ENCODE measurements at regions of chr1 and their contacts with region 1.

Region 1: GRCh38 chr1:32240140-32240951 is 6.7 kb upstream of the FAM167B start:
- DNase-seq: peak; percentile 85 to 96
- H3K4me3 ChIP-seq: peak overlapping the region; percentile 65 to 91 (median 68)
- H3K27ac ChIP-seq: peak overlapping the region; percentile 55
- H3K4me1 ChIP-seq: peaks cover 0 to 7% (median 3%) of the 10 kb centered on the region in 4 experiments; a peak in 3 of 7 replicates
- H3K27me3 ChIP-seq: no peaks in the 10 kb centered on the region; a peak in 1 of 7 replicates
- CTCF ChIP-seq: peak in 2 of 3 experiments; percentile 16 to 27; a peak in 3 of 4 replicates
- EP300 ChIP-seq: no peak
- POLR2A ChIP-seq: peak in 1 of 2 experiments; percentile 73; a peak in 2 of 3 replicates
- RAD21 ChIP-seq: peak in 1 of 2 experiments; percentile 13; a peak in 1 of 4 replicates

Region 2: DNA sequence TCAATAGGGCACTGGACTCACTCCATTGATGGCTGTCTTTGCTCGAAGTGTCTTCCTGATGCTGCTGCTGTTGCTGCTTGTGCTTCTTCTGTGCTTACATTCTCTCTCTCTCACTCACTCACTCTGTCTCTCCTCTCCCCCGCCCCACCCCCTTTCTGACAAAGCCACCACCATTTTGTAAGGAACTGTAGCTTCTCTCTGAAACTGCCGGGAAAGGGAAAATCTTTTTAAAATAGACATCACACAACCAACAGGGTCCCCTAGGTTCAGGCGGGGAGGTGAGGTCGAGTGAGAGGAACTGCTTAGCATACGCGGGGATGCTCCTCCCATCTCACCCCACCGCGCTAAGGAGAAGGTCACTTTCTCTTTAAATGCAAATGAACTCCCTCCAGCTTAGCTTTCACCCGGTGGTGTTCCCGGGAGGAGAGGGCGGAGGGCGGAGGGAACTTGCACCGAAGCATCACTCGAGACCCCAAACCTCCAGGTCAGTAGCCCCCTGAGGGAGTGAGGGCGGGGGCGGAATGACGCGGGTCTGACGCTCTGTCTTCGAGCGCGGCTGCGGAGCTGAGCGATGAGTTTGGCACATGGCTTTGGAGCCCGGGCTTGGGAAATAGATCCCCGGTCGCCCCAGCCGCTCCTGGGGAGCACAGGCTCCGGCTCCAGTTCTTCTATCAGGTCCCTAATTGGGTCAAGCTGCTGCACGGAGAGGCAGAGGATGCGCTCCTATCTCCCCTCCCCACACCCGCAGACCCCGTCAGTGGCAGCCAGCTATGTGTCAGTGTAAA is 39.9 kb before region 1 on chr1 and contains the start of gene CCDC28B:
- CTCF ChIA-PET with region 1: interaction called, 8 read pairs
- POLR2A ChIA-PET with region 1: interaction called, 32 read pairs
- DNase-seq: peak in 1 of 2 experiments; percentile 82
- H3K4me3 ChIP-seq: peak within 1 kb of the TSS; percentile 47 to 67 (median 62)
- H3K27ac ChIP-seq: peak within 1 kb of the TSS; percentile 5; the same call in 1 of the 2 replicates
- H3K4me1 ChIP-seq: peaks cover 13 to 31% (median 20%) of the 10 kb centered on the region in 4 experiments
- H3K27me3 ChIP-seq: peaks cover 0 to 4% (median 2%) of the 10 kb centered on the region in 4 experiments; a peak in 3 of 7 replicates
- CTCF ChIP-seq: no peak
- EP300 ChIP-seq: no peak
- POLR2A ChIP-seq: no peak
- RAD21 ChIP-seq: no peak
- total RNA-seq, gene CCDC28B: 17.1 and 20.9 TPM in 2 replicates

Region 3: DNA sequence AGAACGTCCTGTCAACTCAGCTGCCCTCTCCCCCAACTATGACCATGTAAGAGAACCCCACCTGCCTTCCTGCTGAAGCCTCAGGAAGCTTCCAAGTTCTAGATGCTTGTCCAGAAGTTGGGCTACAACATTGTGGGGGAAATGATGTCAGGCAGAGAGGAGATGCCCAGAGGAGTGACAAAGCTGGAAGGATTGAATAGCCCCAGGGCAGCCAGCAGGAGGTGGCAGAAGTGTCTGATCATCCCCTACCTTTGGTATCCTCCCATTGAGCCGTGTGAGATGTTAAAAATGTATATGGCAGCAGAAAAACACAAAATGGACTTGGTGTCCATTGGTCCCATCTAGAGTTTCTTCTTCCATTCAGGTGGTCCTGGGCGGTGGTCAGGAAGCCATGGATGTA is 11.6 kb before region 1 on chr1:
- CTCF ChIA-PET with region 1: interaction called, 38 read pairs
- POLR2A ChIA-PET with region 1: interaction called, 52 read pairs
- DNase-seq: no peak
- H3K4me3 ChIP-seq: no peak overlapping the region
- H3K27ac ChIP-seq: no peak overlapping the region
- H3K4me1 ChIP-seq: no peaks in the 10 kb centered on the region
- H3K27me3 ChIP-seq: no peaks in the 10 kb centered on the region
- CTCF ChIP-seq: no peak
- EP300 ChIP-seq: no peak
- POLR2A ChIP-seq: no peak
- RAD21 ChIP-seq: no peak

Region 4: DNA sequence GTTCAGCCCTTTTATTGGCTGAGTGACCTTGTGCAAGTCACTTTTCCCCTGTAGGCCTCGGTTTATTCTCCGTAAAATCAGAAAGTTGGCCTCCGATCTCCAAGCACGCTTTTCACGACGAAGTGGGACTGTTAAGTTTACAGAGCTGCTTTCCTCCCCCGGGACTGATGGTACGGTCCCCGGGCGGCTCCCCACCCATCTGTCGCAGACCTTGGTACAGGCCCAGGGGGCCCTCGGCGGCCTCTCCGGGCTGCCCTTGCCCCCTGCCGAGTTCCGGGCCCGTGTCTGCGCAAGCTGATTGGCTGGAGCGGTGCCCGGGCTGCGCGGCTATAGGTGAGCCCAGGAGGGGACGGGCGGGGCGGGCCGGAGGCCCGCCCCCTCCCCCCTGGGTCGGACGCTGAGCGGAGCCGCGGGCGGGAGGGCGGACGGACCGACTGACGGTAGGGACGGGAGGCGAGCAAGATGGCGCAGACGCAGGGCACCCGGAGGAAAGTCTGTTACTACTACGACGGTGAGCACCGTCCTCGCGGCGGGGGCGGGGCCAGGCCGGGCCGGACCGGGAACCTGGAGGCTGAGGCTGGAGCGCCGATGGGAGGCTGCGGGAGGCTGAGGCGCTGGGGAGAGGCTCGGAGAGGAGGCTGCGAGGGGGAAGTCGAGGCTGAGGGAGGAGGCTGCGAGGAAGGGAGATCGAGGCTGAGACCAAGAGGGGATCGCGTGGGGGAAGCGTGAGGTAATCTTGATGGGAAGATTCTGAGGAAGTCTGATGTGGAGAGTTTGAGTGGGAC is 51.6 kb after region 1 on chr1 and contains the start of gene HDAC1:
- CTCF ChIA-PET with region 1: interaction called, 5 read pairs
- POLR2A ChIA-PET with region 1: interaction called, 16 read pairs
- DNase-seq: peak; percentile 84 to 93
- H3K4me3 ChIP-seq: peak within 1 kb of the TSS; percentile 77 to 98 (median 96)
- H3K27ac ChIP-seq: no peak within 1 kb of the TSS
- H3K4me1 ChIP-seq: peaks cover 0 to 5% (median 4%) of the 10 kb centered on the region in 4 experiments
- H3K27me3 ChIP-seq: no peaks in the 10 kb centered on the region
- CTCF ChIP-seq: no peak
- EP300 ChIP-seq: peak; percentile 30 to 92
- POLR2A ChIP-seq: peak in 1 of 2 experiments; percentile 39; a peak in 1 of 3 replicates
- RAD21 ChIP-seq: no peak
- total RNA-seq, gene HDAC1: 111 and 112 TPM in 2 replicates

Region 5: GRCh38 chr1:32413507-32414185 is 173.3 kb after region 1 on chr1:
- CTCF ChIA-PET with region 1: no interaction called
- POLR2A ChIA-PET with region 1: no interaction called
- DNase-seq: peak in 1 of 2 experiments; percentile 72
- H3K4me3 ChIP-seq: no peak overlapping the region
- H3K27ac ChIP-seq: no peak overlapping the region
- H3K4me1 ChIP-seq: no peaks in the 10 kb centered on the region
- H3K27me3 ChIP-seq: no peaks in the 10 kb centered on the region
- CTCF ChIP-seq: peak; percentile 52 to 88 (median 66)
- EP300 ChIP-seq: no peak
- POLR2A ChIP-seq: no peak
- RAD21 ChIP-seq: peak; percentile 87 to 88

Measured in H1 (cell line).